GM23248 (cell line): ENCODE measurements at regions of chr11 and their contacts with region 1.

Region 1: GRCh38 chr11:94973099-94973968 is at the starts of genes CWC15 and KDM4D:
- DNase-seq: peak; percentile 99
- H3K4me3 ChIP-seq: peak within 1 kb of the TSS; percentile 94
- H3K27ac ChIP-seq: peak within 1 kb of the TSS; percentile 72
- H3K4me1 ChIP-seq: peaks cover 7% of the 10 kb centered on the region
- H3K27me3 ChIP-seq: no peaks in the 10 kb centered on the region
- total RNA-seq, gene CWC15: 26.7 and 30.4 TPM in 2 replicates
- total RNA-seq, gene KDM4D: 0.43 and 1.4 TPM in 2 replicates

Region 2: DNA sequence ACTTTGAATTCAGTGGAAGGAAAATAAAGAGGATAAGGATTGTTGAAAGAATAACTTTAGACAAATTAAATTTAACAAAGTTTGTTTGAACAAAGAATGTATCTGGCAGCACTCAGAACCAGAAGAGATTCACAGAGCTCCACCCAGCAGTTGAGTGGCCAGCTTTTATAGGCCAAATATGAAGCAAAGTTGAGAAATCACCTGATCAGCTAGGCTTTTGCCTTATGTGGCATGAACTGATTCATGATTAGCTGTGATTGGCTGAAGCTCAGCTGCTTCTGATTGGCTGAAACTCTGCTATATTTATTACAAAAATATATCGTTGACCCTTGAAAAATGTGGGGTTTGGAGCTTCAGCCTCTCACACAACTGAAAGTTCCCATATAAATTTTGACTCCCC is 343.6 kb before region 1 on chr11:
- in situ Hi-C with region 1: loop called (anchors 5 kb)
- DNase-seq: peak; percentile 13
- H3K4me3 ChIP-seq: no peak overlapping the region
- H3K27ac ChIP-seq: no peak overlapping the region
- H3K4me1 ChIP-seq: no peaks in the 10 kb centered on the region
- H3K27me3 ChIP-seq: no peaks in the 10 kb centered on the region

Region 3: GRCh38 chr11:94794287-94795168 is 178.8 kb before region 1 on chr11:
- in situ Hi-C with region 1: no loop called
- DNase-seq: peak; percentile 96
- H3K4me3 ChIP-seq: peak overlapping the region; percentile 84
- H3K27ac ChIP-seq: peak overlapping the region; percentile 93
- H3K4me1 ChIP-seq: peaks cover 71% of the 10 kb centered on the region
- H3K27me3 ChIP-seq: no peaks in the 10 kb centered on the region

Region 4: DNA sequence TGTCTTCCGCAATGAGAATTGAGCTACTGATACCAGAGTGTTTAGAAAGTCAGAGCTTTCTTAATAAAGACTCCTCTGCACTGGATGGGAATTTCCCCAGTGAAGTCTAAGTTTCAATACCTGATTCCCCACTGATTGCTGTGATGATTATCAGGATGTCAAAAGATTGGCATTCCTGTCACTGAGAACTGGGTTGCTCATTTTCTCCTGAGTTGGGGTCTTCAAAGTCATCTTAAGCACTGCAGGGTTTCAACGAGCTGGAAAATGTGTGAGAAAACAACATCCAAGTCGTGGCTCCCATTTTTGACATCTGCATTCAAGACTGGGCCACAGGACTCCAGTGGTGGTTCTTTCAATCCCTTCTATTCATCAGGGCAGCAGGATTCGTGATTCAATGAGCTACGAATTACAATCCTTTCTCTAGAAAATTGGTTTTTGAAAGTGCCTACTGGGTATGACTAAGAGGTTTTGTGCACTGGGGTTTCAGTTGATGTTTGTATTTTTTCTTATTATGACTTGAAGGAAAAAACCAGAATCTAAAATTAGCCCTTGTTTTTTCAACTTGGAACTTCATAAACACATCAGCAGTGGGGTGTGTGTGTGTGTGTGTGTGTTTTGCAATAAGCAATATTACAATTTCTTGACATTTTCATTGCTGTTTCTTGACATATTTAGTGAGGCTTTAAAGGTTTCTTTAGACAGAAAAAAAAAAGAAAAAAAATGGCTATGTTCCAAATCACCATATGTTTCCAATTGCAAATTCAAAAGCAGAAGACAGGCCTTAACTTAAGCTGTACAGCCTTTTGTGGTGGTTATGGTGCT is 583.2 kb after region 1 on chr11:
- in situ Hi-C with region 1: no loop called
- DNase-seq: peak; percentile 60
- H3K4me3 ChIP-seq: no peak overlapping the region
- H3K27ac ChIP-seq: no peak overlapping the region; the same call in 1 of the 2 replicates
- H3K4me1 ChIP-seq: peaks cover 5% of the 10 kb centered on the region; the same call in 1 of the 2 replicates
- H3K27me3 ChIP-seq: no peaks in the 10 kb centered on the region